Endothelial cell of umbilical vein (primary cell): ENCODE measurements at regions of chr11 and their contacts with region 1.

Region 1: DNA sequence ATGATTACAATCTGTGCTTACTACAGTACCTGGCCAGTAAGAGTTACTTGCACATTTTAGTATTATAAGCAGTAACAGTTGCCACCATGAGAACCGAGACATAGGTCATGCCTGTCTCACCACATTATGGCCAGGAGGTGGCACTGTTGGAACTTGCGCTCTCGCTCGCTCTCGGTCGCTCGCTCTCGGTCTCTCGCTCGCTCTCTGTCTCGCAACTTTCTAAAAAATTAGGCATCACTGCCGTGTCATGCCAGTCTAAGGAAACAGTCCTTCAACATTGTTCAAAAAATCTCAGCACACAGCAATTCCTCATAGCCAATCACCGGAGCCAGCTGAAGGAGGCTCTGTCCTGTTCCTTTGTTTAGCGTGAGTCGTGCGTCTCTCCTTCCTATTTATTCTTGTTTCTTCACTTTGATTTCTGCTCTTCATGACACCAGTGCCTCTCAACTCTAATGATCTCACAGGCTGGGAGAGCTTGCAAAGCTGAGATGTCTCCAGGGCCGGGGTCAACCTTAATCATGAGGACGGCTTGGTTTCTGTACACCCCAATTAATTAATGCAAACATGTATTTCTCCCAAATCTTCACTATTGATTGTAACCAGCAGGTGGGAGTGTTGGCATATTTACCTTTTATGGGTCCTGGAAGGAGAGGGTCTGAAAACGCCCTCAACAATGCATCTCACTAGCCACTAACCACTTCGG is 6.3 kb upstream of the ADAMTS8 start:
- DNase-seq: peak; percentile 87
- H3K4me3 ChIP-seq: peak overlapping the region; percentile 51 to 70 (median 51)
- H3K27ac ChIP-seq: peak overlapping the region; percentile 6
- H3K4me1 ChIP-seq: no peaks in the 10 kb centered on the region
- H3K27me3 ChIP-seq: peaks cover 10 to 12% of the 10 kb centered on the region in 2 experiments
- CTCF ChIP-seq: peak; percentile 79 to 87
- POLR2A ChIP-seq: no peak

Region 2: GRCh38 chr11:130418756-130419155 is 15.9 kb before region 1 on chr11:
- CTCF ChIA-PET with region 1: interaction called, 10 read pairs
- POLR2A ChIA-PET with region 1: no interaction called
- dilution Hi-C with region 1: no loop called
- intact Hi-C with region 1: no loop called
- DNase-seq: no peak
- H3K4me3 ChIP-seq: no peak overlapping the region
- H3K27ac ChIP-seq: no peak overlapping the region
- H3K4me1 ChIP-seq: no peaks in the 10 kb centered on the region
- H3K27me3 ChIP-seq: no peaks in the 10 kb centered on the region
- CTCF ChIP-seq: no peak
- POLR2A ChIP-seq: no peak

Region 3: DNA sequence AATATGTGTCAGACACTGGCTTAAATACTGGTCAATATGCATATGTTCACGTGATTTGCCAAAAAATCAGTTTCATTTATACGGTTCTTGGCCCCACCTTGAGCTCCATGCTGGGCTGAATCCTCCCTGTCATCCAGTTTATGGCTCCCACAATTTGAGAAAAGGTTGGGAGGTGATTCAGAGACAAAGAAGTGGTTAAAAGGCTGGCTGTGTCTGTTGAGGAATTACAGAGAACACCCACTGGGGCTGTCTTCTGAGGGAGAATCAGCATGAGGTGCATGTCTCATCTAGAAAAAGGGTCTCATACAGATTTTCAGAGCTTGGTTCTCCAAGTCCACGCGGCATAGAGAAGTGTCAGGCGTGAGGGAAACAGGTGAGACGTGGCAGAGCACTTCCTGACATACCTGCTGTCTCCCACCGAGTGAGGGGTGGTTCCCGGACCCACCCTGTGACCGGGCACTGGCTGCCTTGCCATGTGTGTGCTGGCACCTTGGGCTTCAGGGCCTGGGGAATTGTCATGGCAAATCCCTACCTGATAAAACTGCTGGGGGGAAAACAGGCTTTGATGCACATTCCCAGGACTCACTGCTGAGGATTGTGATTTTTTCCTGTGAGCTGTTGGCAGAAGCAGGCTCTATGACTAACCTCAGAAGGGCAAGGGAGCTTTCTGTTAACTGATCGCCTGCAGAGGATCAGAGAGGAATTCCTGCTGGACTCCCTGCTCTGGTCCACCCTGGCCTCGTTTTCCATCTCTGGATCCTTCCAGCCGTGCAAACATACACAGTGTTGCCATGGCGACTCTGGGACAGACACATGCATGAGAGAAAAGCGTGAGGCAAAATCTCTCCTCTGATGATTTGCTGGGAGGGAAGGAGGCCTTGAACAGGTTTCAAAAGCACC is 237.4 kb after region 1 on chr11:
- CTCF ChIA-PET with region 1: no interaction called
- POLR2A ChIA-PET with region 1: no interaction called
- dilution Hi-C with region 1: no loop called
- intact Hi-C with region 1: loop called (anchors 5 kb)
- DNase-seq: no peak
- H3K4me3 ChIP-seq: no peak overlapping the region
- H3K27ac ChIP-seq: no peak overlapping the region
- H3K4me1 ChIP-seq: no peaks in the 10 kb centered on the region
- H3K27me3 ChIP-seq: no peaks in the 10 kb centered on the region
- CTCF ChIP-seq: no peak
- POLR2A ChIP-seq: no peak

Region 4: GRCh38 chr11:130861902-130862860 is 427.5 kb after region 1 on chr11:
- CTCF ChIA-PET with region 1: interaction called, 464 read pairs
- POLR2A ChIA-PET with region 1: interaction called, 4 read pairs
- dilution Hi-C with region 1: loop called (anchors 25 kb)
- intact Hi-C with region 1: loop called (anchors 1 kb)
- DNase-seq: peak; percentile 84
- H3K4me3 ChIP-seq: no peak overlapping the region
- H3K27ac ChIP-seq: no peak overlapping the region
- H3K4me1 ChIP-seq: no peaks in the 10 kb centered on the region
- H3K27me3 ChIP-seq: no peaks in the 10 kb centered on the region
- CTCF ChIP-seq: peak; percentile 100
- POLR2A ChIP-seq: no peak

Region 5: DNA sequence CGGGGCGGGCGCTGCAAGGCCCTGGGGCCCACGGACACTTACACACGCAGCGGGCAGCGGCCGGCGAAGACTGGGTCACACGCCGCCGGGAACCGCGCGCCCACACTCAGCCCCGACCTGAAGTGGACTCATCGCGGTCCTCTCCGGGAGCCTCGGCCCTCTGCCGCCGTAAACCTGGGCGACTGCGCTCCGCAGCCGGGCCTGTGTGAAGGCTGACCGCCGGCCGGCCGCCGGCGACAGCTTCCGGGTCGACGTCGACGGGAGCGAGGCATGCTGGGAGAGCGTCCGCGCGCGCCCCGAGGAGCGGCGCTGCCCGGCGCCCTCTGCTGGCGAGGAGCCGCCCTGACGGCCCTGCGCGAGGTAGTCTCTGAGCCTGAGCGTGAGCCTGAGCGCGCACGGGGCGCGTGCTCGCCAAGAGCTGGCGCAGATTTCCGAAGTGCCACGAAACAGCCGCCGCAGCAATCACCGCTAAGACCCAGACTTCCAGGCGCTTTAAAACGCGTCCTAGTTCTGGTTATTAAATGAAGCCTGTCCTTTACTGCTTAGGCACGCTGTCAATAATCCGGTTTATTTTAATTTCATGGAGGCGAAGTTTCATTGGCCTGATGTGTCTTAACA is 481.7 kb after region 1 on chr11 and contains the start of gene SNX19:
- CTCF ChIA-PET with region 1: interaction called, 23 read pairs
- POLR2A ChIA-PET with region 1: no interaction called
- dilution Hi-C with region 1: no loop called
- intact Hi-C with region 1: loop called (anchors 1 kb)
- DNase-seq: peak; percentile 92
- H3K4me3 ChIP-seq: peak within 1 kb of the TSS; percentile 34 to 87 (median 51)
- H3K27ac ChIP-seq: peak within 1 kb of the TSS; percentile 76
- H3K4me1 ChIP-seq: peaks cover 12% of the 10 kb centered on the region
- H3K27me3 ChIP-seq: peaks cover 3 to 4% of the 10 kb centered on the region in 2 experiments
- CTCF ChIP-seq: peak; percentile 91 to 97
- POLR2A ChIP-seq: peak; percentile 89
- total RNA-seq, gene SNX19: 44.3 and 49.8 TPM in 2 replicates